GM18951 (cell line): ENCODE measurements at regions of chr10 and their contacts with region 1.

Region 1: GRCh38 chr10:50224330-50224952 is 26.9 kb downstream of the ASAH2 start:
- POLR2A ChIP-seq: no peak

Region 2: DNA sequence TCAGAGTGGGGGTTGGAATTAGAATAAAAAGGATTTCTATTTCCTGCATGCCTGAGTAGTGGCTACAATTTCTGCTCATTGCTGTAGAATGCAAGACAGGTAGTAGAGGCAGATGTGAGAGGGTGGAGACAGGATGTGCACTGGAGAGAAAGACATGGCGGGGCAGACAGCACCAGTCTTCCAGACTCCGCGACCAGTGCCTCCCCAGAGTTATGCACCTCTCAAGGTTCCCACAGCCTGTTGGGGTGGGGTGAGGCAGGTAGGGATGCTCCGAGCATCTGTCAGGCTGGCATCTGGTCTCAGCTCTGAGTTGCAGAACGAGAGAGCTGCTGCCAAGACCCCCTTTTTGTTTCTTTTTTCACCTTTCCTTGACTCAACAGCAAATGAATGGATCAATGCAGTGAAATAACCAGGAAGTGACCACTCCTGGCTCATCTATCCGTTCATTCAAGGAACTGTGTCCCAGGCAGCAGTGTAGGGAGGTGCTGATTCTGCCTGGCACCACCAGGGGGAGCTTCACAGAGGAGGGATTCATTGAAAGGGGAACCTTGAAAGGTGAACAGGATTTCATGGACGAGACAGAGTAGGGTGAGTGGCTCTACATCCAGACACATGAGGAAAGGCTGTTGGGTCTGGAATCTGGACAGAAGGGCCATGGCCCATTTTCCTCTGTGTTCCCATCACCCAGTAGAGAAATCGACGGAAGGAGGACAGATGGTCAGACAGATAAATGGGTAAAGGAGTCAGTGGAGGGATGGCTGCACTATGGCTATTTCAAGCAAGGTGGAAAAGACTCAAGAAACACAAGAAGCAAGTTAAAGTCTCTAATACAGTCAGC is 631.5 kb before region 1 on chr10:
- in situ Hi-C with region 1: loop called (anchors 25 kb)
- POLR2A ChIP-seq: no peak

Region 3: DNA sequence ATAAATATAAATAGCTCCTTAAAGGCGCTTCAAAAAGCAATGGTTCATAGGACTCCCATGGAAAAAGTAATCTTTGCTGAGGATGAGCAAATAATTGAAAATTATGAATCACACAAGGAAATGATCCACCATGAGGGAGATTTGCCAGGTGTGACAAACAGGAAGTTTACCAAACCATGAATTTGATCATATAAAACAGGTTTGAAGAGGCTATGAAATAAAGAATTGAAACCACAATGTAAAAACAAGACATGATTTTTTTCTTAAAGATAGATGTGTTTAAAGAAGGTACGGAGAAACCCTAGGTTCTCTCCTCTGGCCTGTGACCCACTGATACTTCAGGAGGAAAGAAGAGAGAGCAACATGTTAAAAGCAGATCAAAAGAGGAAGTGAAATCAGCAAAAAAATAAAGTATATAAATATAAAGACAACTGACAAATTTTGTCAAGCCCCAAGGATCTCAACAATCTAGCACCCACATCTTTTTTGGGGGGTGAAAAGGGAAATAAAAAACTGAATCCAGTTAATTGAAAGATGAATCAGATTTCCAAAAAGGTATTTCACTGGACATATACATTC is 138.2 kb after region 1 on chr10:
- in situ Hi-C with region 1: no loop called
- POLR2A ChIP-seq: no peak

Region 4: GRCh38 chr10:50470345-50470744 is 245.9 kb after region 1 on chr10:
- in situ Hi-C with region 1: no loop called
- POLR2A ChIP-seq: no peak